ENCODE measurements at regions of chr6 and their contacts with region 1.

Region 1: GRCh38 chr6:27672113-27672799 is 199.4 kb upstream of the ZNF184 start:
- DNase-seq: peak; percentile 83
- H3K4me3 ChIP-seq: peak overlapping the region; percentile 85
- H3K27ac ChIP-seq: peak overlapping the region; percentile 58
- H3K4me1 ChIP-seq: peaks cover 32% of the 10 kb centered on the region
- H3K27me3 ChIP-seq: no peaks in the 10 kb centered on the region
- CTCF ChIP-seq: no peak

Region 2: DNA sequence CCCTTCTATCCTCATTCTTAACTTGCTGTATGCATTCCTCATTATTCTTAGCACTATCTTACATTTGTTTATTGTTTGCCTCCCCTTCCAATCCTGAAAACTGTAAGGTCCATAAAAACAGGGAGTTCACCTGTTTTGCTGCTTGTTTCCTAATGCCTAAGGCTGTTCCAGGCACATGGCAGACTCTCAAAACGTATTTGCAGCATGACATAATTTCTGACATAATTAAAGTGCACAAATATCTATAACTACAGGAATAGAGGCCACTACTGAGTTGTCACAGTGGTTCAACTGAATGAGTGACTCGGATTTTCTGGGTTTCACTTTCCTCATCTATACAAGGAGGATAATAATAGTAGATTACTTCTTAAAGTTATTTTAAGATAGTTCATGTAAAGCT is 1502.1 kb before region 1 on chr6:
- CTCF ChIA-PET with region 1: no interaction called
- POLR2A ChIA-PET with region 1: interaction called, 12 read pairs
- intact Hi-C with region 1: no loop called
- DNase-seq: no peak
- H3K4me3 ChIP-seq: no peak overlapping the region
- H3K27ac ChIP-seq: 0 out of 2 replicates have a peak overlapping the region, but pooled peaks have one; percentile 78
- H3K4me1 ChIP-seq: peaks cover 30% of the 10 kb centered on the region
- H3K27me3 ChIP-seq: no peaks in the 10 kb centered on the region
- CTCF ChIP-seq: no peak

Region 3: DNA sequence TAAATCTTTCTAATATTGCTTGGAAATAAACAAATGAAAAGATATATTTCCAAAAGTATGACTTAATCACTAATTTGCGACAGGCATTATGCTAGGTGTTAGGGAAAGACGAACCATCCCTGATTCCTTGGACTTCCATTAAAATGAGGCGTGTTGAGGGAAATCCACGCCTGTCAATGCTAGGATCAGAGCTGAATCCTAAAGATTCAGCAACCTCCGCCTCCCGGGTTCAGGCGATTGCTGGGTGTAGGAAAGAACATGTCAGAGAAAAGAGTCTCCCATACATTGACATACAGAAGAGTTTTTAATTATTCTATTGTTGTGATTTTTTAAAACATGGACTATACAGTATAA is 441.5 kb before region 1 on chr6:
- CTCF ChIA-PET with region 1: no interaction called
- POLR2A ChIA-PET with region 1: no interaction called
- intact Hi-C with region 1: loop called (anchors 2 kb)
- DNase-seq: peak; percentile 25 to 41
- H3K4me3 ChIP-seq: peak overlapping the region; percentile 53
- H3K27ac ChIP-seq: peak overlapping the region; percentile 22; the same call in 1 of the 2 replicates
- H3K4me1 ChIP-seq: peaks cover 9% of the 10 kb centered on the region; the same call in 1 of the 2 replicates
- H3K27me3 ChIP-seq: no peaks in the 10 kb centered on the region
- CTCF ChIP-seq: no peak

Region 4: GRCh38 chr6:27472617-27473400 is 199.4 kb before region 1 on chr6 and contains the start of gene ZNF184:
- CTCF ChIA-PET with region 1: no interaction called
- POLR2A ChIA-PET with region 1: no interaction called
- intact Hi-C with region 1: loop called (anchors 5 kb)
- DNase-seq: peak; percentile 94 to 98
- H3K4me3 ChIP-seq: peak within 1 kb of the TSS; percentile 91
- H3K27ac ChIP-seq: peak within 1 kb of the TSS; percentile 79
- H3K4me1 ChIP-seq: peaks cover 12% of the 10 kb centered on the region; the same call in 1 of the 2 replicates
- H3K27me3 ChIP-seq: no peaks in the 10 kb centered on the region
- CTCF ChIP-seq: peak; percentile 19; the same call in 1 of the 2 replicates
- total RNA-seq, gene ZNF184: 7.0 and 8.8 TPM in 2 replicates

Region 5: GRCh38 chr6:27617700-27618689 is 54.3 kb before region 1 on chr6:
- CTCF ChIA-PET with region 1: interaction called, 4 read pairs
- POLR2A ChIA-PET with region 1: interaction called, 3 read pairs
- intact Hi-C with region 1: loop called (anchors 5 kb)
- DNase-seq: peak; percentile 50 to 60
- H3K4me3 ChIP-seq: peak overlapping the region; percentile 78
- H3K27ac ChIP-seq: peak overlapping the region; percentile 30
- H3K4me1 ChIP-seq: peaks cover 8% of the 10 kb centered on the region
- H3K27me3 ChIP-seq: no peaks in the 10 kb centered on the region
- CTCF ChIP-seq: 0 out of 2 replicates have a peak, but pooled peaks have one; percentile 28

Region 6: GRCh38 chr6:27687154-27688013 is 15.1 kb after region 1 on chr6:
- CTCF ChIA-PET with region 1: interaction called, 4 read pairs
- POLR2A ChIA-PET with region 1: no interaction called
- intact Hi-C with region 1: loop called (anchors 1 kb)
- DNase-seq: peak; percentile 69 to 87
- H3K4me3 ChIP-seq: peak overlapping the region; percentile 61
- H3K27ac ChIP-seq: peak overlapping the region; percentile 6; the same call in 1 of the 2 replicates
- H3K4me1 ChIP-seq: peaks cover 6% of the 10 kb centered on the region; the same call in 1 of the 2 replicates
- H3K27me3 ChIP-seq: no peaks in the 10 kb centered on the region
- CTCF ChIP-seq: peak; percentile 73; the same call in 1 of the 2 replicates

Measured in PC-9 (cell line).